Lower leg skin (tissue), 4 donors: ENCODE measurements at regions of chrX and their contacts with region 1.

Region 1: GRCh38 chrX:111914398-111915090 is 38.6 kb downstream of the TRPC5OS start:
- DNase-seq: no peak
- H3K4me3 ChIP-seq: no peak overlapping the region
- CTCF ChIP-seq: no peak
- POLR2A ChIP-seq: no peak

Region 2: DNA sequence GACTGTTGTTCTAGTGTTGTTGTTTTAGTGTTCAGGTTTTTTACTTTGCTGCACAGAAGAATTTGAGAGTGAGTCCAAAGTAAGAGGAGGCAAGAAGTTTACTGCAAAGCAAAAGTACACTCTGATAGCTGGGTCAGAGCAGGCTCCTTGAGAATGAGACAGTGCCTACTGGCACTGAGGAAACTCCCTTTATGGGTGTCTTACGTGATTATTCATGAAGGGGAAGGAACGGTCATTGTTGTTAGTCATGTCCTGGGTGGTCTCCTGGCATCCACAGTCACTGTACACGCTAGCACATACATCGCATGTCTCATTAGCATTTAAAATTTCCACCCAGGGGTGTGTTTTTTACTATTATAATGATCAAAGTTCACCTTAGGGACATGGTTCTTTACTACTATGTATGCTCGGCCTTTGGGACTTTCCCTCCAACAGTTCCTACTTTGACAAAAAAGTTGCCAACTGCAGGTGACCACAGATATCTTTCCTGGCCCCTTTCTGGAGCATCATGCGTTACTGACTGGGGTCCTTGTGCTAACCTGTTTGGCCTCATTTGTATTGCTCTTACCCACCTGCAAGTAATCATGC is 1615.0 kb after region 1 on chrX:
- intact Hi-C with region 1: loop called (anchors 5 kb)
- DNase-seq: no peak
- H3K4me3 ChIP-seq: no peak overlapping the region
- CTCF ChIP-seq: no peak
- POLR2A ChIP-seq: no peak